Right cardiac atrium (tissue), 5 donors: ENCODE measurements at regions of chr6 and their contacts with region 1.

Region 1: GRCh38 chr6:118651282-118652050 is at the start of gene CEP85L:
- DNase-seq: peak; percentile 94 to 98 (median 97)
- ATAC-seq: peak; percentile 99
- H3K4me3 ChIP-seq: peak within 1 kb of the TSS; percentile 91
- H3K27ac ChIP-seq: peak within 1 kb of the TSS; percentile 91
- H3K4me1 ChIP-seq: no peaks in the 10 kb centered on the region
- H3K27me3 ChIP-seq: no peaks in the 10 kb centered on the region
- total RNA-seq, gene CEP85L: 6.3 to 11.5 (median 8.5) TPM

Region 2: GRCh38 chr6:118387764-118388701 is 263.4 kb before region 1 on chr6:
- intact Hi-C with region 1: no loop called
- DNase-seq: no peak
- ATAC-seq: no peak
- H3K4me3 ChIP-seq: no peak overlapping the region
- H3K27ac ChIP-seq: no peak overlapping the region
- H3K4me1 ChIP-seq: no peaks in the 10 kb centered on the region
- H3K27me3 ChIP-seq: no peaks in the 10 kb centered on the region

Region 3: DNA sequence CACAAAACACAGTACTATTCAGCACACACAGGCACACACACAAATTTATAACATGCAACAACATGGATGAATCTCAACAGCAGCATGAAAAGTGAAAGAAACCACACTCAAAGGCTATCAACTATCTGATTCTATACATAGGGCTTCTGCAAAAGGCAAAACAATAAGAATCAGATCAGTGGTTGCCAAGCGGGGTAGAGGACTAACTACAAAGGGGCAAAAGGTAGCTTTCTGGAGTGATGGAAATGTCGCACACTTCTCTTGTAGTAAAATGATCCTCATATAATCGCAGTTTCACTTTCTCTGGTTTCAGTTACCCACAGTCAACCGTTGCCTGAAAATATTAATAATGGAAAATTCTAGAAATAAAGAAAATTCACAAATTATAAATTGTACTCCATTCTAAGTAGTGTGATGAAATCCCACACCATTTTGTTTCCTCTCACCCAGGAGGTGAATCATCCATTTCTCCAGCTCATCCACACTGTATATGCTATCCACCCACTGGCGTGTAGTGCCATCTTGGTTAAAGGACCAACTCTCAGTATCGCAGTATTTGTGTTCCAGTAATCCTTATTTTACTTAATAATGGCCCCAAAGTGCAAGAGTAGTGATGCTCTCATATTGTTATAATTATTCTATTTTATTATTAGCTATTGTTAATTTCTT is 116.2 kb before region 1 on chr6:
- intact Hi-C with region 1: no loop called
- DNase-seq: no peak
- ATAC-seq: no peak
- H3K4me3 ChIP-seq: no peak overlapping the region
- H3K27ac ChIP-seq: no peak overlapping the region
- H3K4me1 ChIP-seq: peaks cover 2% of the 10 kb centered on the region
- H3K27me3 ChIP-seq: no peaks in the 10 kb centered on the region

Region 4: DNA sequence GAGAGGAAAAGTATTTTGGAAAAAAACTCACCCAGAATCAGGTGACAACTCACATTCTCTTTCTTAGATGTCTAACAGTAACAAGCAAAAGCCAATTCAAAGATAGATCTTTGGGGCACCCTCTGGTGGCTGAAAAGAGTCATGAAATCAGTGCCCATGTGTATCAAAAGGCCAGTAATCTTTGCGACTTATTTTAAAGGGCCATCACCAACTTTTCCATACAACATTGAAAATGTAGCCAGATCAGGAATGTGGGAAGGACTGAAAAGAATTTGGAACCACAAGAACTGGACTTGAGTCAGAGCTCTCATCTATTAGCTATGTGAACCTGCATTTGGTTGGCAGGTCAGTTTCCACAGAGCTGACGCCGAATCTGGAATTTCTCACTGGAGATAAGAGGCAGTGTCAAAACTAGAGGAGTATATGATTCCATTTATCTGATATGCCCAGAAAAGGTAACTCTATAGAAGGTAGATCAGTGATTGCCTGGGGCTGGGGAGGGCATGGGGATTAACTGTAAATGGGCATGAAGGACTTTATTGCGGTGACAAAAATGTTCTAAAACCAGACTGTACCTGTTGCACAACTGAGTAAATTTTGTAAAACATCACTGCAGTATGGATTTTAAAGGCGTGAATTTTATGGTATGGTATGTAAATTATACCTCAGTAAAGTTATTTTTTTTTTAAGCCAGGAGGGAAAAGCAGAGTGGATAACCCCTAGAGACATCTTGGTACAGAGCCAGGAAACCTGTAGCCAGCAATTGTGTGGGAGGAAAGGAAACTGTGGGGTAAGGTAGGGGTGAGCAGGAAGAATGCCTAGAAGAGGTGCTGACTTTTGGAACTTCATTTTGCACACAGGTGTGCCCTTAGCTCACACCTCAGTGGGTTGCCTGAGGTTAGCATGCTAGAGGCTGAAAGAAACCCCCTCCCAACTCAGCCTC is 125.4 kb after region 1 on chr6:
- intact Hi-C with region 1: loop called in 1 of 4 experiments (anchors 10 kb)
- DNase-seq: peak in 2 of 3 donors; percentile 41 to 72
- ATAC-seq: peak; percentile 74
- H3K4me3 ChIP-seq: peak overlapping the region; percentile 4
- H3K27ac ChIP-seq: no peak overlapping the region
- H3K4me1 ChIP-seq: no peaks in the 10 kb centered on the region
- H3K27me3 ChIP-seq: no peaks in the 10 kb centered on the region